ENCODE measurements at regions of chr20 and their contacts with region 1.

Region 1: DNA sequence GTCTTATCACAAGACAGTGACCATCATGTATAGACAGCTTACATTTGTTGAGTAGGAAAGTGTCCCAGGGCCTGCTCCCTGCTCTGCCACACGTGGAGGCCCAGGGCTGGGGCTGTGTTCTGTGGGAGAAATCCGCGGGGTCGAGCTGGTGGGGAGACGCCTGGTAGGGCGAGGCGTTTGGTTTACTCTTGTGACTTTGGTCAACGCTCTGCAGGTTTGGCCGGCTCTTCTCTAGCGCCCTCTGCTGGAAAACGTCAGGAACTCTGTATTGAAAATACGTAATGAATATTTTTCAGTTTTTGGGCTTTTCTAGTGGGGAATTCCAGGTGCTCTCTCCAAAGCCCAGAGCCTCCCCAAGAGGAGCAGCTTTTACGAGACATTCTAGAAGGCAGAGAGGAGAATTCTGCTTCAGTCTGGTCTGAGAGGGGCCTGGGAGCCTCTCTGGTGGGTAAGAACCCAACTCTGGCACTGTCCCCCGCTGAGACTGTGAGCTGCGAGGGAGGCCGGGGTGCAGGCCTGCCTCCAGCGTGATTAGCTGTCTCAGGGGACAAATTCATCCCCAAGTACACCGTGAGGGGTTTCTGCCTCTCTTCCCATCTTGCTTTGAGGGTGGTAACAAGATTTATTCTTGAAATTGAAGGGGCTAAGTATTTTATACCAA is 112.6 kb upstream of the RALGAPA2 start:
- DNase-seq: peak; percentile 75
- ATAC-seq: peak; percentile 68

Region 2: DNA sequence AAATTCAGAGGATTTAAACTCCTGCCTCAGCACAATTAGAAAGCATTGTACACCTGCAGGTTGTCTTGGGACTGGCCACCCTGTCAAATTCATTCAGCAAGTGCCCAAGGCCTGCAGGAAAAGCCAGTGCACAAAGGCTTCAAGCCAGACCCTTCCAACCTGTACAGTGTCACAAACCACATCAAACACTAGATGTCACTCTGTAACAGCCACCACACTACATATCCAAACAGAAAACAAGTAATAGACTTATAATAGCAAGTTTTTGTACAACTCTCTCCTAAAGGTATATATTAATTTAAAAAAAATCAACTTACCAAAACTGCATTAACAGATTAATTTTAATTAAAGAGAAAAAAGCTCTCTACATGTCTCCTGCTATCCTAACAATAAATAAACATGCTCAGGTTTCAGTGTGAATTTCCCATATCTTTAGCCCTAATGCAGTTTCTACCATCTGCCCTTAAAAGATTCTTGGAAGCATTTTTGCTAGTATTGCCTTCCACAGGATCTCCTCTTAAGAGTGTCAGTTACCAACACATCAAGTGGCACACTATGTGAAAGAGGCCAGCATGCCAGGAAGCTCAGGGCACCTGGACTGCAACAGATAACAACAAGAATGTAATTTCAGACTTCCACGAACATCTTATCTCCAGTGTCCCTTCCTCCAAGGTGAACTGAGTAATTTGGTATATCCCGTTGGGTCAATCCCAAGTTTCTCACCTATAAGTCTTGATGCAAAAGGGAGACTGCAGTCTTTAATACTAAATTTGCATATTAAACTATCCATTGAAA is 160.1 kb before region 1 on chr20:
- intact Hi-C with region 1: loop called (anchors 10 kb)
- DNase-seq: no peak
- ATAC-seq: peak; percentile 71

Region 3: DNA sequence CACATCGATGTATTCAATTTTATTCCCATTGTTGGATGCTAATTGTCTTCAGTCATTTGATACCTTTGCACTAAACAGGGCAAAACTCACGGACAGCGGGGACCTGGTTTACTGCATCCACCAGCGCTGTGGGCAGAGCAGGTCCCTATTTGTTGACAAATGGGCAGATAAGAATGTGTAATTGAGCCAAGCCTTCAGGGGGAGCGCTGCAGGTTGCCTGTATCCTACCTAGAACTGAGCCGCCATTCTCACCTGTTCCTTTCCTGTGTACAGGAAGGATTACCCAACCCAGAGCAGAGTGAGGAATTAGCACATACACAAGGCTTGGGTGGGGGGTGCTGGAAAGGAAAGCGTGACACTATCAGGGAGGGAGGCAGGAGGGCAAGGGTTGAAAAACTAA is 1848.4 kb after region 1 on chr20:
- intact Hi-C with region 1: no loop called
- DNase-seq: no peak
- ATAC-seq: no peak